AG04450 (cell line): ENCODE measurements at regions of chr10 and their contacts with region 1.

Region 1: DNA sequence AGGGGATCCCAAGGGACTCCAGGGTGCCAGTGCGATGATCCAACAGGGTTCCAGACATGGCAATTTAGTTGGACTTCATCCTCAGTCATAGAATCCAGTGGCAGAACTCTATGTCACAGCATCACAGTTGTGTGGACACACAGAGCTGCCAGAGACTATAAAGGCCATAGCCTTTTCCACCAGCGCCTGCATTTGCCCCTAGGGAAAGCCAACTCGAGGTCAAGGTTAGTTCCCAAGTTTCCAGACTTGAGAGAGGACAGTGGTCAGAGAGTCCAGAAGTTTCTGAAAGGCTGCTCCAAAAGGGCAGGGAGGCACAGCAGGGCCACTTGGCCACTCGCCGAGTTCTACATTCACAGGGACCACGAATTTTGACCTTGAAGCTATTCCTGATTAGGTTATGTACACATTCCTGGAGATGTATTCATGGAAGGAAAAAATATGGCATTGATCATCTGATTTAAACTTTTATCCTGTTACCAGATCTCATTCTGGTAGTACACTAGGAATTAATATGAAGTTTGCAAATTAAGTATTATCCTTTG is 170.1 kb downstream of the KCNMA1 start:
- DNase-seq: no peak
- H3K4me3 ChIP-seq: no peak overlapping the region
- H3K27ac ChIP-seq: no peak overlapping the region
- H3K27me3 ChIP-seq: no peaks in the 10 kb centered on the region
- CTCF ChIP-seq: no peak

Region 2: GRCh38 chr10:77448226-77448625 is 19.3 kb before region 1 on chr10:
- CTCF ChIA-PET with region 1: no interaction called
- POLR2A ChIA-PET with region 1: no interaction called
- DNase-seq: no peak
- H3K4me3 ChIP-seq: no peak overlapping the region
- H3K27ac ChIP-seq: no peak overlapping the region
- H3K27me3 ChIP-seq: no peaks in the 10 kb centered on the region
- CTCF ChIP-seq: no peak

Region 3: GRCh38 chr10:77494327-77494726 is 26.8 kb after region 1 on chr10:
- CTCF ChIA-PET with region 1: no interaction called
- POLR2A ChIA-PET with region 1: interaction called, 11 read pairs
- DNase-seq: no peak
- H3K4me3 ChIP-seq: no peak overlapping the region
- H3K27ac ChIP-seq: no peak overlapping the region
- H3K27me3 ChIP-seq: no peaks in the 10 kb centered on the region
- CTCF ChIP-seq: peak; percentile 55

Region 4: DNA sequence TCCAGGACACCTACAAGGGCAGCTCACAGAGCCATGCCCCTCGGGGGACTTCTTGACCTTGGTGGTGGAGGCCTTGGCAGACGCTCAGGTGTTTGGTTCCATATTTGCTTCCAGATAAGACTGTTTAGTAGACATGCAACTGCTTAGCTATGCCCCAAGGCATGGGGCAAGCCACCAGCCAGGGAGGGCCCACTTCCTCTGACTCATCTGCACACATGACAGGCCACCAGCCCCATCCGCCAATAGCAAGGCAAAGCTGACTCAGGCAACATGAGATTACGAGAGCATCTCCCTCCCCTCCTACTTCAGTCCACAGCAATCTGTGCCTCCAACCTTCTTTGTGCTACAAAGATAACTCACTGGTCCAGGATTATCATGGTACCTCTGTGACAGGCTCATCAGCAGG is 115.2 kb after region 1 on chr10:
- CTCF ChIA-PET with region 1: no interaction called
- POLR2A ChIA-PET with region 1: no interaction called
- DNase-seq: no peak
- H3K4me3 ChIP-seq: no peak overlapping the region
- H3K27ac ChIP-seq: peak overlapping the region; percentile 49
- H3K27me3 ChIP-seq: no peaks in the 10 kb centered on the region
- CTCF ChIP-seq: no peak